Activated T-helper 2 cell treated with anti-CD3 and anti-CD28 coated beads, Interferon-gamma antibody, Interleukin-2, Interleukin-4, amounts not matched to agents 10 μg/mL and 5 μg/mL and 100 μg/mL, durations not matched to agents 14 hours and 24 hours and 36 hours (primary cell): ENCODE measurements at regions of chr14 and their contacts with region 1.

Region 1: DNA sequence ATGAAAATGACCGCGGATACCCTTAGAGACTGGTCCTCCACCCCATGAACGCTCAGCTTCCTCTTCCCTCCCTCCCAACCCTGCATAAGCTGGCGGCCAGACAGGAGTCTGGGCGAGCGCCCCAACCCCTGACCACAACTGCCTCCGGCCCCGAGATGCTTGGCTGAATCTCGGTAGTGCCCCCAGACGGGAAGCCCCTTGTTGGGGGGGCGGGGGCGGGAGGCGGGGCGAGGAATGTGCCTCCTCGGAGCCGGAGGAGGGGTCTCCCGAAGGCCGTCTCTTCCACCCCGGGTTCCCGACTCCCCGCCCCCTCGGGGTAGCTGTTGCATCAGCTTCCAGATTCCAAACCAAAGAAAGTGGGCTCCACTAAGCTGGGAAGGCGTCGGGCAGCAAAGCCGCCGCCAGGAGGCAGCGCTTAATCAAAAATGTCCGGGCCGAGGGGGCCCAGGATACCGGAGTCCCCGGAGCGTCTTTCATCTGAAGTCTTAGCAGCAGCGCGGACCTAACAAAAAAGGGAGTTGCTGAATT is 7.1 kb upstream of the MRPL52 start:
- DNase-seq: peak; percentile 47
- H3K4me3 Mint-ChIP-seq: peak overlapping the region; percentile 62
- H3K27ac Mint-ChIP-seq: no peak overlapping the region
- H3K4me1 Mint-ChIP-seq: peaks cover 24% of the 10 kb centered on the region
- H3K27me3 Mint-ChIP-seq: peaks cover 19% of the 10 kb centered on the region

Region 2: DNA sequence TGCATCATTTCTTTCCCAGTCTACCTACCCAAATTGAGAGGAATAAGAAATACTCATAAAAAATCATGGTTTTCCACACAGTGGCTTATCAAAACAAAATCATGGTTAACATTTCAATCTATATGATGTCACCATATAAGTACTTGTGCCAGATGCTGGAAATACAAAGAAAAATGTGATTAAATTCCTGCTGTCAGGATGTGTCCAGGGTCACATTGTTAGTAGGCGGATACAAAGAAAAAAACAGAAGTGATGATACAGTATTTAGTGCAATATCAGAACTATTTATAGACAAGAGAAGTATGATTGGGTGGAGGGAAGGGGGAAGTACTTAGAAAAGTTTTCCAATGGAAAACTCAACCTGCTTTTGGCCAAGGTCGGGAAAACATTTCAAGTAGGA is 131.5 kb before region 1 on chr14:
- intact Hi-C with region 1: no loop called
- DNase-seq: no peak
- H3K4me3 Mint-ChIP-seq: no peak overlapping the region
- H3K27ac Mint-ChIP-seq: no peak overlapping the region
- H3K4me1 Mint-ChIP-seq: peaks cover 5% of the 10 kb centered on the region
- H3K27me3 Mint-ChIP-seq: peaks cover 23% of the 10 kb centered on the region

Region 3: GRCh38 chr14:22811722-22812121 is 10.9 kb before region 1 on chr14:
- intact Hi-C with region 1: no loop called
- DNase-seq: no peak
- H3K4me3 Mint-ChIP-seq: no peak overlapping the region
- H3K27ac Mint-ChIP-seq: no peak overlapping the region
- H3K4me1 Mint-ChIP-seq: peaks cover 6% of the 10 kb centered on the region
- H3K27me3 Mint-ChIP-seq: peaks cover 6% of the 10 kb centered on the region

Region 4: GRCh38 chr14:22847661-22848341 is 25.2 kb after region 1 on chr14:
- intact Hi-C with region 1: no loop called
- DNase-seq: no peak
- H3K4me3 Mint-ChIP-seq: no peak overlapping the region
- H3K27ac Mint-ChIP-seq: no peak overlapping the region
- H3K4me1 Mint-ChIP-seq: peaks cover 9% of the 10 kb centered on the region
- H3K27me3 Mint-ChIP-seq: peaks cover 8% of the 10 kb centered on the region

Region 5: DNA sequence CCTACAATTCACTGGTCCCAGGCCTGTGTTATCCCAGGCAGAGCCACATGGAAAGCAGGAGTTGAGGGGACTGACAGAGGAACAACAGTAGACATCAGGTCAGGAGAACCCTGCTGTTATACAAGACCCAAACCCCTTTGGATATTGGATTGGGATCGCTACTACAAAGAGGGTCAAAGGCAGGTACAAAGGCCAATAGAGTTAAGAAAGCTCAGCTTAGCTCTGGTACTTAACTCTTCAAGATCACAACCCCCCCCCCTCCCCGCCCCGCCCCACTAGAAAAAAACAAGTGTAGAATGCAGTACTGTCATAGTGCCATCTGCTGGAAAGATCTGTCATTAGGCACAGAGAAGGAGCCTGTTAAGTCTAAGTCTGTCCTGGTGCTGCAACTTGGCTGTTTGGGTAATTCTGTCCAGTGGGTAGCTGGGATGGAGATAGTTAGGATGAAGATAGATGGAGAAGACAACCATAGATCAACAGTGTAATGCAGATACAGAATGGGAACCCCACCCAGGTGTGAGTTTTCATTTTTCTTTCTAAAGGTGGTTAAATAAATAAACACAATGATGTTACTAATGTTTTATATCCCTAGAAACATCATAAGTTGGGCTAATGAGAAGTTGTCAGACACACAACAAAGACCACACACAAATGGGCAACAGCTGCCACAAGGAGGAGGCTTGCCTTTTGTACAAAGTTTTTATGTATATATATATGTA is 77.6 kb after region 1 on chr14:
- intact Hi-C with region 1: loop called (anchors 2 kb)
- DNase-seq: peak; percentile 26
- H3K4me3 Mint-ChIP-seq: no peak overlapping the region
- H3K27ac Mint-ChIP-seq: peak overlapping the region; percentile 2
- H3K4me1 Mint-ChIP-seq: peaks cover 19% of the 10 kb centered on the region
- H3K27me3 Mint-ChIP-seq: no peaks in the 10 kb centered on the region